PC-3 (cell line): ENCODE measurements at regions of chr1 and their contacts with region 1.

Region 1: DNA sequence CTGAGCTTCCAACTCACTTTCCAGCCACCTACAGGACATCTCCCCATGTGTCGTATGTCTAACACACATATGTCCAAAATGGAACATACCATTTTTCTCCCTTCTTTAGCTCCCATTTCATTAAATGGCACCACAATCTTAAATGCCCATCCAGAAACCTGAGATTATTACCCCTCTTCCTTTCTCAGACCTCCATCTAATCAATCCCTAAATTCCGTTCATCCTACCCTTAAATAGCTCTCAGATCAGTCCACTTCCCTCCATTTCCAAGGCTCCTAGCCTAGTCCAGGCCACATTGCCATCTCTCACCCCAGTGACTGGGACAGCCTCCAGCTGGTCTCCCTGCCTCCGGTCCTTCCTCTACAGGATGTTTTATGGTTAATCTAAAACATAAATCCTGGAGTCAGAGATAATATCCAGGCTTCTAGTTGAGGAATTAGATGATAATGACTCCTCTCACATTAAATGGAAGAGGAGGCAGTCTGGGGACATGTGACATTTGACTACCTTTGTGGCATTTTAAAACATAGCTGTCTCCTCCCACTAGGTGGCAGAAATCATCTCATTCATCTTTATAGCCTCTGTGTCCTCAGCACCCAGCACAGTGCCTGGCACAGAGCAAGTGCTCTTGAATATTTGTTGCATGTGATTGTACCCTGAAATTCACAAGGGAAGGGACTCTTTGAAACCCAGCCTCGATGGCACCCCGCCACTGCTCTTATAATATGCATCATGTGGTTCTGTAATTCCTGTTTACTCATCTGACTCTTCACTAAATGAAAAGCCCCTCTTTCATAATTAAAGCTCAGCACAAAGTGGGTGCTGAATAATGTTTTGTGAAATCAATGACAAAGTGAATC is 102.3 kb downstream of the TMEM53 start:
- DNase-seq: peak; percentile 53
- ATAC-seq: peak; percentile 57; the same call in 1 of the 2 replicates
- H3K4me3 ChIP-seq: no peak overlapping the region
- H3K27ac ChIP-seq: no peak overlapping the region
- H3K4me1 ChIP-seq: peaks cover 12% of the 10 kb centered on the region
- H3K27me3 ChIP-seq: no peaks in the 10 kb centered on the region
- CTCF ChIP-seq: peak; percentile 72

Region 2: DNA sequence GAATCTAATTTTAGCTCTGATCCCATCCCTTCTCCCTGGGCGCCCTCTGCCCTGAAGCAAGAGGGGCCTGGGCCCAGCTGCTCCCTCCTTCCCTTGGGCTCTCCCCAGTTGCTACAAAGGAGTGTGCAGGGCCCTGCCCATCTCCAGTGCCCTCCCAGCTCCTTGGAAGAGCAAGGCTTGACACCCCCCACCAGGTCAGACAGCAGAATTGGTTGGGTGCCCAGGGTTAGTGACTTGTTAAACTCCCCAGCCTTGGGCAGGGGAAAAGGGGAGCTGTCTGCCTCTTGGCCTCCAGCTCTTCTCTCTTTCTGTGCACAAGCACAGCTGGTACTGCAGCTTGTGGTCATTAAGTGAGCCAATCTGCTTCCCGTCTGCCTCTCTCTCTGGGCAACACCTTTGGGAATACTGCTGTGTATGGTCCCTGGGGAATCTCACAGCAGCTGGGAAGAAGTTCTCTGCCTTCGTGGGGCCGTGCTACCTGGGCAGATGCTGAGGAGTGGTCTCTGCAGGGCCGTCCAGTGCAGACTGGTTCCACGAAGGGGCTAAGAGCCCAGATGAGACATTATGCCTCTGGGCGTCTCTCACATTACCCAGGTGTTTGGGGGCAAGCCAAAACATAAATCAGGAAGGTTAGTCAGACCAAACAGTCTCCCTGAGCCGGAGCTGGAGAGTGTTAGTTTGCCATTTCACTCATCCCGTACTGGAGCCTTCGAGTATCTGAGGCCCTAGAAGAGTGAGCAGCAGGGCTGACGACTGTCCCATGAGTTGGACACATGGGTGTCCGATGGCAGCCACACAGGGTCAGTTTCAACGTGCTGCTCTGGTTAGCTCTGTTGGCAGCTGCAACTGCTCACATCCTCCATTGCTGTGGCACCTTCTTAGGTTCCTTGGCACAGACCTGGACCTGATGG is 65.0 kb after region 1 on chr1:
- CTCF ChIA-PET with region 1: no interaction called
- POLR2A ChIA-PET with region 1: no interaction called
- intact Hi-C with region 1: loop called (anchors 2 kb)
- DNase-seq: peak; percentile 65
- ATAC-seq: peak; percentile 45
- H3K4me3 ChIP-seq: no peak overlapping the region
- H3K27ac ChIP-seq: 0 out of 2 replicates have a peak overlapping the region, but pooled peaks have one; percentile 11
- H3K4me1 ChIP-seq: peaks cover 21% of the 10 kb centered on the region
- H3K27me3 ChIP-seq: no peaks in the 10 kb centered on the region
- CTCF ChIP-seq: no peak